CD8-positive, alpha-beta T cell (primary cell): ENCODE measurements at regions of chr3 and their contacts with region 1.

Region 1: GRCh38 chr3:52220380-52221026 is 4.9 kb downstream of the TLR9 start:
- DNase-seq: peak; percentile 75 to 96 (median 86)
- ATAC-seq: peak; percentile 58
- H3K4me3 ChIP-seq: no peak overlapping the region
- H3K4me3 Mint-ChIP-seq: peak overlapping the region; percentile 65
- H3K27ac ChIP-seq: no peak overlapping the region
- H3K27ac Mint-ChIP-seq: peak overlapping the region; percentile 70
- H3K4me1 ChIP-seq: peaks cover 92% of the 10 kb centered on the region
- H3K4me1 Mint-ChIP-seq: peaks cover 85% of the 10 kb centered on the region
- H3K27me3 ChIP-seq: no peaks in the 10 kb centered on the region
- H3K27me3 Mint-ChIP-seq: no peaks in the 10 kb centered on the region
- CTCF ChIP-seq: peak; percentile 70

Region 2: DNA sequence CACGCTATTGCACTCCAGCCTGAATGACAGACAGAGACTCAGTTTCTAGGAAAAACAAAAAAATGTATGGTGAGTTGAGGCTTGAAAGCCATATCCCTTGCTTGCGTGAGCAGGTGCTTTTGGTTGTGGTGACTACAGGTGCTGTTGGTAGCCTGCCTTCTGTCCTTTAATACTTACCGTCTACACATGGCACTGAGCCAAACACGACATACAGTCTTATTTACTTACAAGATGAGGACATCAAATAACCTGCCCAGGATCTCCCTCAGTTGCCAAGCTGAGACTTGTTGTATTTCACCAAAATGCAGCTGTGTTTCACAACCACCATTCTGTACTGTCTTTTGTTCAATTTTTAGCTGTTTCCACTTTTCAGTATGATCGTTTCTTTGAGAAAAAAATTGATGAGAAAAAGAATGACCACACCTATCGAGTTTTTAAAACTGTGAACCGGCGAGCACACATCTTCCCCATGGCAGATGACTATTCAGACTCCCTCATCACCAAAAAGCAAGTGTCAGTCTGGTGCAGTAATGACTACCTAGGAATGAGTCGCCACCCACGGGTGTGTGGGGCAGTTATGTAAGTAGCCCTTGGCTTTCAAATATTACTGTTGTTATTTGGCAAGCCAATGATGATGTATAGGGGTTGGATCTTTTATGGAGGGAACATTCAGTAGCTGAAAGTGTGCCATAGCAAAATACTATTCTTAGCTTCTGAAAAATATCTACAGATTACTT is 16.0 kb before region 1 on chr3:
- CTCF ChIA-PET with region 1: interaction called, 32 read pairs
- POLR2A ChIA-PET with region 1: interaction called, 12 read pairs
- intact Hi-C with region 1: loop called in 1 of 2 experiments (anchors 2 kb)
- DNase-seq: no peak
- ATAC-seq: no peak
- H3K4me3 ChIP-seq: no peak overlapping the region
- H3K4me3 Mint-ChIP-seq: no peak overlapping the region
- H3K27ac ChIP-seq: no peak overlapping the region
- H3K27ac Mint-ChIP-seq: no peak overlapping the region
- H3K4me1 ChIP-seq: peaks cover 10% of the 10 kb centered on the region
- H3K4me1 Mint-ChIP-seq: peaks cover 26% of the 10 kb centered on the region
- H3K27me3 ChIP-seq: no peaks in the 10 kb centered on the region
- H3K27me3 Mint-ChIP-seq: no peaks in the 10 kb centered on the region
- CTCF ChIP-seq: no peak

Region 3: GRCh38 chr3:52238761-52239701 is 18.5 kb after region 1 on chr3 and contains the start of gene TWF2:
- CTCF ChIA-PET with region 1: interaction called, 79 read pairs
- POLR2A ChIA-PET with region 1: interaction called, 29 read pairs
- intact Hi-C with region 1: loop called in 1 of 2 experiments (anchors 2 kb)
- DNase-seq: peak; percentile 67 to 95 (median 88)
- ATAC-seq: peak; percentile 83
- H3K4me3 ChIP-seq: peak within 1 kb of the TSS; percentile 79 to 95
- H3K4me3 Mint-ChIP-seq: peak within 1 kb of the TSS; percentile 98
- H3K27ac ChIP-seq: peak within 1 kb of the TSS; percentile 85 to 95
- H3K27ac Mint-ChIP-seq: peak within 1 kb of the TSS; percentile 98
- H3K4me1 ChIP-seq: peaks cover 77% of the 10 kb centered on the region
- H3K4me1 Mint-ChIP-seq: peaks cover 76% of the 10 kb centered on the region
- H3K27me3 ChIP-seq: no peaks in the 10 kb centered on the region
- H3K27me3 Mint-ChIP-seq: no peaks in the 10 kb centered on the region
- CTCF ChIP-seq: peak; percentile 58
- total RNA-seq, gene TWF2: 31.1 to 31.2 TPM

Region 4: DNA sequence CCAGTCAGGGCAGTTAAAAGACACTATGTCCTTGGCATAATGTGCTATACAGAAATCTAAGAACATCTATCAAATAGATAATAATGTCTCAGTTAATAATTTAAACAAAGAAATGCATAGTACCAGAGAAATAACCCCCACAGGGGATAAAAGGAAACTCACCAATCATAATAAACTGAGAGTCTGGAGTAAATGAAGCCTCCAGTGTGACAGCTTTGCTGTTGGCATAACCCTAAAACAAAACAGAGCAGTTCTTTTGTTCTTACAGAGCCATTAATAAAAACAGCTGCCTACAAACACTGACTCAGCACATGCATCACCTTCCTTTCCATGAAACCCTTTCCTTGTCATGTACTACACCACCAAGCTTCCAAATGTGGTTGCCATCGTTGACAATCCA is 38.5 kb after region 1 on chr3:
- CTCF ChIA-PET with region 1: interaction called, 28 read pairs
- POLR2A ChIA-PET with region 1: interaction called, 7 read pairs
- intact Hi-C with region 1: no loop called
- DNase-seq: no peak
- ATAC-seq: no peak
- H3K4me3 ChIP-seq: no peak overlapping the region
- H3K4me3 Mint-ChIP-seq: no peak overlapping the region
- H3K27ac ChIP-seq: peak overlapping the region in 1 of 2 experiments; percentile 6
- H3K27ac Mint-ChIP-seq: peak overlapping the region; percentile 100
- H3K4me1 ChIP-seq: peaks cover 91% of the 10 kb centered on the region
- H3K4me1 Mint-ChIP-seq: peaks cover 94% of the 10 kb centered on the region
- H3K27me3 ChIP-seq: no peaks in the 10 kb centered on the region
- H3K27me3 Mint-ChIP-seq: no peaks in the 10 kb centered on the region
- CTCF ChIP-seq: no peak

Region 5: GRCh38 chr3:52278510-52279069 is 58.1 kb after region 1 on chr3 and contains the start of gene WDR82:
- CTCF ChIA-PET with region 1: interaction called, 38 read pairs
- POLR2A ChIA-PET with region 1: interaction called, 14 read pairs
- intact Hi-C with region 1: no loop called
- DNase-seq: peak; percentile 94 to 99 (median 98)
- ATAC-seq: peak; percentile 77
- H3K4me3 ChIP-seq: peak within 1 kb of the TSS; percentile 65 to 95
- H3K4me3 Mint-ChIP-seq: peak within 1 kb of the TSS; percentile 94
- H3K27ac ChIP-seq: peak within 1 kb of the TSS; percentile 79 to 93
- H3K27ac Mint-ChIP-seq: peak within 1 kb of the TSS; percentile 99
- H3K4me1 ChIP-seq: peaks cover 49% of the 10 kb centered on the region
- H3K4me1 Mint-ChIP-seq: peaks cover 72% of the 10 kb centered on the region
- H3K27me3 ChIP-seq: no peaks in the 10 kb centered on the region
- H3K27me3 Mint-ChIP-seq: no peaks in the 10 kb centered on the region
- CTCF ChIP-seq: peak; percentile 36
- total RNA-seq, gene WDR82: 115 to 117 TPM

Region 6: DNA sequence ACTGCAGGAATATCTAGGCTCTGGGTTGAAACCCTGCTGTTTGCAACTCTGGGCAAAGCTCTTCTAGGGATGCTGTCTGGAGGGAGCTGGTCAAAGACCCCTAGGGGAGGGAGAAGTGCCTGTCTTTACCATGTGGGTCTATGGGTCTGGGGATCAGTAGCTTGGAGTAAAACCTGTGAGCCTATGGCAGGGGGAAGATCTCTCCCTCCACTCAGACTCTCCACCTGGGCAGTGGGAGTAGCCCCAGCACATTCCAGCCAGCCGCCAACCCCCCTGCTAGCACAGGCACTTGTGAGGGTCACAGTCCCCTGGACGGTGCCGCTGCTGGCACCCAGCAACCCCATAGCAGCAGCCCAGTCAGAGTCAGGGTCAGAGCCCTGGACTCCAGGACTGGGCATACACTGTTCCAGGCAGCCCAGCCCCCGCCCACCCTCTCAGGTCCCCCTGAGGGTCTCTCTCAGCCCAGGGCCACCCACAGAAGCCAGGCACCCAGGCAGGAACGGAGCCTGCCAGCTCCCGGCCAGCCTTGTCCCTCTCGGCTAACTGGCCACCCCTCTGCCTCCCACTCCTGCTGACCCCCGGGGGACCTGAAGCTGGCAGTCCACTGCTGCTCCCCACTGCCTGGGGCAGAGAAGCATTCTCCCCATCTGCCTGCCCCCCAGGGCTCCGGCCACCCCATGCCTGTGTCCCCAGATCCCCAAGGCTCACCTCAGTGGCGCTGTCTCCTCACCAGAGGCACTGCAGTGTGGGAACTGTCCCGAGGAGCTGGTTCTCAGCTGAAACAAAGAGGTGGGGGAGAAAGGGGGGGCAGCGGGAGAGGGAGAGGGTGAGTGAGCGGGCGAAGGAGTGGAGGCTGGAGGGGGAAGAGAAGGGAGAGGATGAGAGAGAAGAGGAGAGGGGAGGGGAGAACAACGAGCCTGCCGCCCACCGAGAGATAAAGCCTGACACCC is 77.9 kb after region 1 on chr3:
- CTCF ChIA-PET with region 1: interaction called, 10 read pairs
- POLR2A ChIA-PET with region 1: no interaction called
- intact Hi-C with region 1: no loop called
- DNase-seq: peak in 1 of 9 experiments; percentile 6
- ATAC-seq: no peak
- H3K4me3 ChIP-seq: no peak overlapping the region
- H3K4me3 Mint-ChIP-seq: no peak overlapping the region
- H3K27ac ChIP-seq: no peak overlapping the region
- H3K27ac Mint-ChIP-seq: no peak overlapping the region
- H3K4me1 ChIP-seq: no peaks in the 10 kb centered on the region
- H3K4me1 Mint-ChIP-seq: peaks cover 7% of the 10 kb centered on the region
- H3K27me3 ChIP-seq: no peaks in the 10 kb centered on the region
- H3K27me3 Mint-ChIP-seq: no peaks in the 10 kb centered on the region
- CTCF ChIP-seq: no peak